ENCODE measurements at regions of chr16 and their contacts with region 1.

Region 1: DNA sequence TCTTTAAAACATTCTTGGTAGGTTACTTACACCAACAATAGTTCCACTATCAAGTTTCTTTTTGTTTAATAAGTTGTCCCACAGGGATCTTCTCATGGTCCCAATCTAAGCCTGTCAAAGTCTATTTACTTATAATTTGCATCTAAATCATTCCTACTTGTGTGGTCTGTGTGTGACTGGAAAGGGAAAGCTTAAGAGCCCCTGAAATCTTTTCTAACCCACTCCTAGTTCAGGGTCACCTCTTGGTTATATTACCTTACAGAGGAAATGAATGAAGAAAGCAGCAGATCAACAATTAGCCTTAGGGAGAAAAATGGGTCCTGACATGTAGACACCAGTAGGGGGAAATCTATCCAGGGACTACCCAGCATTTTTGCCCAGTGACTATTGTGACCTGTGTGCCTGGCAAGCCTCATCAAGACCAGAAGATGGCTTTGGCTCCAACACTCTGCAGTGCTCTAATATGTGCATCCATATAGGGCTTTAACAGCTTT is 110.4 kb upstream of the HAS3 start:
- DNase-seq: peak; percentile 63
- H3K4me3 Mint-ChIP-seq: no peak overlapping the region
- H3K27ac Mint-ChIP-seq: peak overlapping the region; percentile 66
- H3K4me1 Mint-ChIP-seq: peaks cover 61% of the 10 kb centered on the region
- H3K27me3 Mint-ChIP-seq: no peaks in the 10 kb centered on the region
- CTCF ChIP-seq: peak; percentile 58

Region 2: DNA sequence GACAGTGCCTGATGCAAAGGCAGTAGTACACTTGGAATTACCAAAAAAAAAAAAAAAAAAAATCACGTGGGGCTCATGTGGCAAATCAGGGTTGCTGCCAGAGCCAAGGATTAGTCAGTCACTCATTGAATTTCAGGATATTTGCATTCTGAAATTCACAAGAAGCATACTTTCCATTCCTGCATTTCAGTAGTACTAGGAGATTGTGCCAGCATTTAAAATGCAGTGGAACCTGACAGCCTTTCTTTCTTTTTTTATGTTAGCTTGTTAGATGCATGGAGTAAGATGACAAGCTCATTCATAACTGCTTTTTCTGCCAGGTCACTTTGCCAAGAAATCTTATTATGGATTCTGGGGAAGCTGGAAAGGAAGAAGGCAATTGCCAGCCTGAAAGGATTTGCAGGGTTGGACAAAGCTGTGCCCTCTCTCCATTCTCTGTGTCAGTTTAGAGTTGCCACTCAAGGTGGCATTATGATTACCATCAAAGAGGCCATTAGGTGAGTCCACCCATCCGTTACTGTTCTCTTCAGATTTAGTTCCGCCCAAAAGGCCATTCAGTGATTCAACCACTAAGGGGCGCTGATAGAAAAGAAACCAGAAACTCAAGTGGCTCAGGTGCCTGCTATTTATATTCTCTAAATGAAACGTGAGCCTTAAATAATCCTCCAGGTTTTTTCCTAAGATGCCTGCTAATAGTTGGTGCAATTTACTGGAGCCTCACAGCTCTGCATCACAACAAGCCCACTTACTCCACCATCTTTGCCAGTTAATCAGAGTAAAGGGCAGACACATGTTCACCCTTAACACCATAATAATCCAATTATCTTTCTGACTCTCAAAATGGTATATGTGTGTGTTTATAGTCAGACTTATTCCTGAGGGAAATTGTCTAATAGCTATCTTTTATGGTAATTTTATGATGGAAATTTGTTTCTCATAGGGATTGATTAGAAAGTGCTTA is 92.8 kb before region 1 on chr16:
- CTCF ChIA-PET with region 1: interaction called, 6 read pairs
- intact Hi-C with region 1: loop called (anchors 5 kb)
- DNase-seq: peak; percentile 76
- H3K4me3 Mint-ChIP-seq: no peak overlapping the region
- H3K27ac Mint-ChIP-seq: no peak overlapping the region
- H3K4me1 Mint-ChIP-seq: peaks cover 10% of the 10 kb centered on the region
- H3K27me3 Mint-ChIP-seq: no peaks in the 10 kb centered on the region
- CTCF ChIP-seq: peak; percentile 82

Region 3: GRCh38 chr16:68921654-68922053 is 73.4 kb before region 1 on chr16:
- CTCF ChIA-PET with region 1: no interaction called
- intact Hi-C with region 1: loop called (anchors 5 kb)
- DNase-seq: peak; percentile 82
- H3K4me3 Mint-ChIP-seq: peak overlapping the region; percentile 38
- H3K27ac Mint-ChIP-seq: peak overlapping the region; percentile 95
- H3K4me1 Mint-ChIP-seq: peaks cover 31% of the 10 kb centered on the region
- H3K27me3 Mint-ChIP-seq: no peaks in the 10 kb centered on the region
- CTCF ChIP-seq: no peak

Region 4: DNA sequence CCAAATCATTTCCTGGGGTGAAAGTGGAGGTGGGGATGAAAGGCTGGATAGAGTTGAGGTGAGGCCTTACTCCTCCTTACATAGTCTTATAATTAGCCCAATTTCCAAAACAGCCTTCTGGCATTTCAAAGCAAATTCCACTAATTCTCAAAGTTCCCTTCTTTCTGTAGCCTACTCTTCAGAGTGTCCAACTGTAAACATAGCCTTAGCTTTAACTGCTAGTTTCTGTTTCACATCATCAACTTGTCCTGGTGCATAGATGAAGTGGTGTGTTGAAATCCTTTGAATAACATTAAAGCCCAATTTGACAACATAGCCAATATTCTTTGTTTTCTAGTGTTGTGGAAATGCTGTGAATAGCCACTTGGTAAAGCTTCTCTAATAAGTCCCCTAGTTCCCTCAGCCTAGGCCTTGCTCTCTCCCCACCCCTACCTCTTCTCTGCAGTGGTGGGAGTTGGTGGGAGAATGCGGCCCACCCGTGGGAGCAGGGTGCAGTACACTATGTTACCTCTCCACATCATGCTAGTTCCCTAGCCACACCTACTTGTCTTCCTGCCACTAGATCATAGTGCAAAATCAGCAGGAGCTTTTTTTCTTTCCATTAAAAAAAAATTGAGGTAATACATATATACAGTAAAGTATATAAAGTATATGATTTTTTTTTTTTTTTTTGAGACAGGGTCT is 16.6 kb before region 1 on chr16:
- CTCF ChIA-PET with region 1: no interaction called
- intact Hi-C with region 1: no loop called
- DNase-seq: no peak
- H3K4me3 Mint-ChIP-seq: no peak overlapping the region
- H3K27ac Mint-ChIP-seq: no peak overlapping the region
- H3K4me1 Mint-ChIP-seq: no peaks in the 10 kb centered on the region
- H3K27me3 Mint-ChIP-seq: no peaks in the 10 kb centered on the region
- CTCF ChIP-seq: no peak

Region 5: GRCh38 chr16:69031877-69032301 is 36.8 kb after region 1 on chr16:
- CTCF ChIA-PET with region 1: no interaction called
- intact Hi-C with region 1: loop called (anchors 5 kb)
- DNase-seq: peak; percentile 78
- H3K4me3 Mint-ChIP-seq: no peak overlapping the region
- H3K27ac Mint-ChIP-seq: peak overlapping the region; percentile 85
- H3K4me1 Mint-ChIP-seq: peaks cover 21% of the 10 kb centered on the region
- H3K27me3 Mint-ChIP-seq: no peaks in the 10 kb centered on the region
- CTCF ChIP-seq: no peak

Region 6: DNA sequence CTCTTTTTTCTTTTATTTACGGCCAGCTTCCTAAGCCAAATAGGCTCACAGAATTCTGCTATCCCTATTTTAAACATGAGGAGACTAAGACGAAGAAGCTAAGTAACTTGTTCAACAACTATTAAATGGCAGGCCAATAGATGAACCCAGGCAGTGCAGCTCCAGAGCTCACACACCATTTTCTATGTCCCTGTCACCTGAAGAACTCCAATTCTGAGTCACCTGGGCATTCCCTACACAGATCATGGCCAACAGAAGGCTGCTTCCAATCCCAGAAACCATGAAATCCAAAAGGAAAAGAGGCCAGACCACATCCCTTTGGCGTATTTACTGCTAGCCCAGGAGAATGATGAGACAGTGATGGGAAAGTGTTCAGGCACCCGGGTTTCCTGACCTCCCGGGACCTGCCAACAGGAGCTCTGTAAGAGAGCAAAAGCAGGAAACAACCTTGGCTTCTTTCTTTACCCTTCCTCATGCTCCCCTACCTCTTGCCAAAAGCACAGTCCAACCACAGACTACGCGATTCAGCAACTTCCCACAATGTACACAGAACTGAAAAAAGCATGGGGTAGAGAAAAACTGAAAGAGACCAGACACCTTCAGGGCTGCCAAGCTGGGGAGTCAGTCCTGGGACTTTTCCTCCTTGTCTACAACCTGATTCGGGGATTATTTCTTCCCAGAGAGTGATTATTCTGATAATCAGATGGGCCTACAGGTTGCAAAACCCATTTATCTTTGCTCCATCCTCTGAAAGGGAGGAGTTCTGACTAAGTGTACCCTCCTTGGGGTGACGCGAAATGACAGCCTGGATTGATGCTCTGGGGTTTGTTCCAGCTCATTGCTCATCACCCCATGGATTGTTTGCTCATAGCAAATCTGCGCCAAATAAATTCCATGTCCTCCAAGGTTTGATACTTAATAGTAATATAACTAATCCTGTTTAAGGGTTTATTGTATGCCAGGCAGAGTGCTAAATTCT is 62.6 kb after region 1 on chr16:
- CTCF ChIA-PET with region 1: no interaction called
- intact Hi-C with region 1: no loop called
- DNase-seq: no peak
- H3K4me3 Mint-ChIP-seq: no peak overlapping the region
- H3K27ac Mint-ChIP-seq: no peak overlapping the region
- H3K4me1 Mint-ChIP-seq: peaks cover 15% of the 10 kb centered on the region
- H3K27me3 Mint-ChIP-seq: no peaks in the 10 kb centered on the region
- CTCF ChIP-seq: no peak

Region 7: GRCh38 chr16:69073161-69073669 is 78.2 kb after region 1 on chr16:
- CTCF ChIA-PET with region 1: interaction called, 6 read pairs
- intact Hi-C with region 1: loop called (anchors 1 kb)
- DNase-seq: peak; percentile 76
- H3K4me3 Mint-ChIP-seq: peak overlapping the region; percentile 26
- H3K27ac Mint-ChIP-seq: peak overlapping the region; percentile 81
- H3K4me1 Mint-ChIP-seq: peaks cover 39% of the 10 kb centered on the region
- H3K27me3 Mint-ChIP-seq: no peaks in the 10 kb centered on the region
- CTCF ChIP-seq: no peak

Region 8: DNA sequence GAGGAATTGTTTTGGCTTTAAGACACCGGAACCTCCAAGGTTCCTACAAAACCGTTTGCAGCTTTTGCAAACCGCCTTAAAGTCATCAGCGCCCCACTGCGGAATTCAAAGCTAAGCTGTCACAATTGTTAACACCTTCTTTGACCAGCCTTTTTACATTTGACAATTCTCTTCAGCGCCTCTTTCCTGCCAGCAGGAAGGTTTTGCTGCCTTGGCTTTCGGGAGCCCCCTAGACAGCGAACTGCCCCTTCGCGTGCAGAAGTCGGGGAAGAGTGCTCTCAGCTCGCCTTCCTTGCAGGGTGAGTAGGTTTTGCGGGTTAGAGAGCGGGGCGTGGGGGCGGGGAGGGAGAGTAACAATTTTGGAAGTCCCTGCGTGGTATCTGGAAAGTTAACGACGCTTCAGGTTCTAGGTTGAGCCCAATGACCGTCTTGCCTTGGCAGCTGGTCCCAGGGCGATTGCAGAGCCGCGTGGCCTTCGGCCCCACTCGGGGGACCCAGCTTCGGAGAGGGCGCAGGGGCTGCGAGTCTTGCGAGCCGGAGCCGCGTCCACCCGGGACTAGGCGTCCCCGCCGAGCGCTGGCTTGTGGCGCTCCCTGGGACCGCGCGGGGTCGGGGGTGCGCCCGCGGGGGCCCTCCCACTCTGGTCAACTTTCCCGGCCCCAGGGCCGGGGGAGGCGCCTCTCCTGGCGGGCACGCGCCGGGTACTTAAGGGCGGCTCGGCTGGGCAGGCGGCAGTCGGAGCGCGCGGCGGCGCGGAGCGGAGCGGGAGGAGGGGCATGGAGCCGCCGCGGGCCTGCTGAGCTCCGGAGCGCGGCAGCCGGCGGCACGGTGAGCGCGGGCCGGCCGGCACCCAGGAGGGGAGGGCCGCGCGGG is 110.7 kb after region 1 on chr16 and contains the start of gene HAS3:
- CTCF ChIA-PET with region 1: interaction called, 14 read pairs
- intact Hi-C with region 1: loop called (anchors 1 kb)
- DNase-seq: peak; percentile 88
- H3K4me3 Mint-ChIP-seq: peak within 1 kb of the TSS; percentile 85
- H3K27ac Mint-ChIP-seq: peak within 1 kb of the TSS; percentile 87
- H3K4me1 Mint-ChIP-seq: peaks cover 35% of the 10 kb centered on the region
- H3K27me3 Mint-ChIP-seq: peaks cover 3% of the 10 kb centered on the region
- CTCF ChIP-seq: peak; percentile 34
- total RNA-seq, gene HAS3: 29.8 and 33.2 TPM in 2 replicates

Measured in Calu3 (cell line).